Calu3 (cell line): ENCODE measurements at regions of chr10 and their contacts with region 1.

Region 1: GRCh38 chr10:66925896-66926715 is at the start of gene LRRTM3:
- DNase-seq: peak; percentile 72
- H3K4me3 Mint-ChIP-seq: peak within 1 kb of the TSS; percentile 53
- H3K27ac Mint-ChIP-seq: no peak within 1 kb of the TSS
- H3K4me1 Mint-ChIP-seq: peaks cover 27% of the 10 kb centered on the region
- H3K27me3 Mint-ChIP-seq: peaks cover 28% of the 10 kb centered on the region
- CTCF ChIP-seq: peak; percentile 66
- total RNA-seq, gene LRRTM3: not detected in 2 replicates

Region 2: GRCh38 chr10:66307826-66308225 is 618.3 kb before region 1 on chr10:
- CTCF ChIA-PET with region 1: no interaction called
- intact Hi-C with region 1: loop called (anchors 10 kb)
- DNase-seq: no peak
- H3K4me3 Mint-ChIP-seq: no peak overlapping the region
- H3K27ac Mint-ChIP-seq: no peak overlapping the region
- H3K4me1 Mint-ChIP-seq: no peaks in the 10 kb centered on the region
- H3K27me3 Mint-ChIP-seq: no peaks in the 10 kb centered on the region
- CTCF ChIP-seq: no peak

Region 3: GRCh38 chr10:66586073-66586472 is 340.0 kb before region 1 on chr10:
- CTCF ChIA-PET with region 1: interaction called, 3 read pairs
- intact Hi-C with region 1: loop called (anchors 2 kb)
- DNase-seq: peak; percentile 36
- H3K4me3 Mint-ChIP-seq: no peak overlapping the region
- H3K27ac Mint-ChIP-seq: no peak overlapping the region
- H3K4me1 Mint-ChIP-seq: no peaks in the 10 kb centered on the region
- H3K27me3 Mint-ChIP-seq: no peaks in the 10 kb centered on the region
- CTCF ChIP-seq: no peak

Region 4: GRCh38 chr10:66637273-66638036 is 288.7 kb before region 1 on chr10:
- CTCF ChIA-PET with region 1: no interaction called
- intact Hi-C with region 1: loop called (anchors 5 kb)
- DNase-seq: no peak
- H3K4me3 Mint-ChIP-seq: no peak overlapping the region
- H3K27ac Mint-ChIP-seq: no peak overlapping the region
- H3K4me1 Mint-ChIP-seq: no peaks in the 10 kb centered on the region
- H3K27me3 Mint-ChIP-seq: no peaks in the 10 kb centered on the region
- CTCF ChIP-seq: no peak

Region 5: GRCh38 chr10:66747451-66747850 is 178.7 kb before region 1 on chr10:
- CTCF ChIA-PET with region 1: interaction called, 3 read pairs
- intact Hi-C with region 1: loop called (anchors 5 kb)
- DNase-seq: peak; percentile 31
- H3K4me3 Mint-ChIP-seq: no peak overlapping the region
- H3K27ac Mint-ChIP-seq: peak overlapping the region; percentile 34
- H3K4me1 Mint-ChIP-seq: peaks cover 19% of the 10 kb centered on the region
- H3K27me3 Mint-ChIP-seq: no peaks in the 10 kb centered on the region
- CTCF ChIP-seq: no peak

Region 6: GRCh38 chr10:66804962-66805361 is 121.1 kb before region 1 on chr10:
- CTCF ChIA-PET with region 1: interaction called, 7 read pairs
- intact Hi-C with region 1: loop called (anchors 5 kb)
- DNase-seq: no peak
- H3K4me3 Mint-ChIP-seq: no peak overlapping the region
- H3K27ac Mint-ChIP-seq: no peak overlapping the region
- H3K4me1 Mint-ChIP-seq: peaks cover 23% of the 10 kb centered on the region
- H3K27me3 Mint-ChIP-seq: no peaks in the 10 kb centered on the region
- CTCF ChIP-seq: no peak

Region 7: GRCh38 chr10:66836057-66836456 is 90.0 kb before region 1 on chr10:
- CTCF ChIA-PET with region 1: no interaction called
- intact Hi-C with region 1: loop called (anchors 5 kb)
- DNase-seq: peak; percentile 58
- H3K4me3 Mint-ChIP-seq: no peak overlapping the region
- H3K27ac Mint-ChIP-seq: peak overlapping the region; percentile 13
- H3K4me1 Mint-ChIP-seq: peaks cover 55% of the 10 kb centered on the region
- H3K27me3 Mint-ChIP-seq: no peaks in the 10 kb centered on the region
- CTCF ChIP-seq: no peak